ENCODE measurements at regions of chr6 and their contacts with region 1.

Region 1: DNA sequence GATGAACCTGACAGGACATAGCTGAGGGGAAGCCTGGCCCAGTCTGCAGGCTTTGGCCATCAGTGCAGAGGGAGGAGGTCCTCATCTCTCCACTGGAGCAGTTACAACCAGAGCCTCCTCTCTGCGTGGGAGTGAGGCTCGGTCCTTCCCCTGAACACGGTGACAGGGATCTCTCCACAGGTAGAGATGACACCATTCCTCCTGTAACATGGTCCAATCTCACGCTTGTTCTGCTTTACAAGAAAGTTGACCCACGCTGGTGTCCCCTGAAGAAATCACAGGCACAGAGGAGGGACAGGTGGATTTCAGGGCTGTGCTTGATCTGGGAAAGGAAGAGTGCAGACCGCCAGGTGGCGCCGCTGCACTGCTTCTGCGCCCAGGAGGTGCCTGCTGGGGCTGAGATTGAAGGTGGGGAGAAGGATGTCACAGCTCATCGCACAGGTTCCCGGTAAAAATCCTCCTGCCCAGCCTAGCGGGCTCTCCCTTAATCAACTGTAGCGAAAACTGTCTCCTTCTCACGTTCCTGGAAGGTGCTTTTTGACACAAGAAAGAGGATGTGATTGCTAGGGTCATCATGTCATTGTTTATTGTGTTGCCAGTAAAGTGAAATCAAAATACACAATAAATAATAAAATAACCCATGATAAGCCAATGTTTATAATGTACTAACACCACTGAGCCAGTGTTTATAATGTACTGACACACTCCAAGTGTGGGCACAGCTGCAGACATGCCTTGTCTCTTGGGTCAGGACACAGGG is 20.4 kb downstream of the HLA-G start:
- DNase-seq: peak; percentile 82

Region 2: GRCh38 chr6:30013291-30013922 is 165.4 kb after region 1 on chr6:
- in situ Hi-C with region 1: loop called (anchors 25 kb)
- DNase-seq: peak; percentile 59

Region 3: DNA sequence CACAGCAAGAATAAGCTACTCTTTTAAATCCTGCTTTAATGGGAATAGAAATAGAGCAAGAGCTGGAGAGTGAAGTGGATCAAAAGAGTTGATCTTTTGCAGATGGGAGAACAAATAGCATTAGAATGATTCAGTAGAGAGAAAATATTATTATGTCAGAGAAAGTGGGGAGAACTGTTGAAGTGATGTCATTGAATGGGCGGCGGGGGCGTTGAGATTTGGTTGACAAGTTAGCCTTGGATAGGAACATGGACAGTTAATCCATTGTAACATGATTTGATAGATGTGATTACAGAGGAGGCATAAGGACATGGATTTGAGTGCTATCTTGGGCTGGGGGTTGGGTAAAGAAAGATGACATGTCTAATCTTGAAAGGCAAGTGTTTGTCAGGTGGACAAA is 787.8 kb after region 1 on chr6:
- in situ Hi-C with region 1: no loop called
- DNase-seq: no peak

Measured in KBM-7 (cell line).